ENCODE measurements at regions of chr5 and their contacts with region 1.

Region 1: GRCh38 chr5:93189707-93190120 is 391.3 kb downstream of the NR2F1-AS1 start:
- DNase-seq: peak; percentile 31 to 97
- H3K4me3 ChIP-seq: no peak overlapping the region
- H3K27ac ChIP-seq: peak overlapping the region; percentile 75
- H3K4me1 ChIP-seq: peaks cover 60% of the 10 kb centered on the region
- H3K27me3 ChIP-seq: no peaks in the 10 kb centered on the region
- CTCF ChIP-seq: no peak

Region 2: GRCh38 chr5:93078082-93079038 is 111.4 kb before region 1 on chr5:
- CTCF ChIA-PET with region 1: no interaction called
- POLR2A ChIA-PET with region 1: no interaction called
- intact Hi-C with region 1: loop called (anchors 1 kb)
- DNase-seq: peak; percentile 81 to 99
- H3K4me3 ChIP-seq: peak overlapping the region; percentile 43; the same call in 1 of the 2 replicates
- H3K27ac ChIP-seq: peak overlapping the region; percentile 94
- H3K4me1 ChIP-seq: peaks cover 35% of the 10 kb centered on the region
- H3K27me3 ChIP-seq: no peaks in the 10 kb centered on the region
- CTCF ChIP-seq: no peak

Region 3: GRCh38 chr5:93107805-93108520 is 81.8 kb before region 1 on chr5:
- CTCF ChIA-PET with region 1: no interaction called
- POLR2A ChIA-PET with region 1: no interaction called
- intact Hi-C with region 1: no loop called
- DNase-seq: no peak
- H3K4me3 ChIP-seq: no peak overlapping the region
- H3K27ac ChIP-seq: no peak overlapping the region
- H3K4me1 ChIP-seq: no peaks in the 10 kb centered on the region
- H3K27me3 ChIP-seq: no peaks in the 10 kb centered on the region
- CTCF ChIP-seq: no peak

Region 4: DNA sequence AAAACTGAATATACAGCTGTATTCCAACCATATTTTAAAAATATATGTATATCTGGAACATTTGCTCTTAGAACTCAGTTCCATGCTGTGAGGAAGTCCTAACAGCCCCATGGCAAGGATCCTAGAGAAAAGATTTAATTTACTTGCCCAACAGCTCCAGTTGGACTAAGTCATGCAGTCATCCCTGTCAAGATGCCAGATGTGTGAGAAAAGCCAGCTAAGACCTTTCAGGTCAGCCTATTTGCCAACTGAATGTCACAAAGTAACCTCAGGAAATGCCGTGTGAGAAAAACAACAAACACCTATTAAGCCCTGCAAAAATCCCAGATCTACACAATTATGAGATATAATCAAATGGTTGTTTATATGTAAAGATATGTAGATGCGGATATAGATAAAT is 25.0 kb before region 1 on chr5:
- CTCF ChIA-PET with region 1: no interaction called
- POLR2A ChIA-PET with region 1: interaction called, 6 read pairs
- intact Hi-C with region 1: loop called (anchors 1 kb)
- DNase-seq: peak; percentile 29 to 66
- H3K4me3 ChIP-seq: no peak overlapping the region
- H3K27ac ChIP-seq: peak overlapping the region; percentile 98
- H3K4me1 ChIP-seq: peaks cover 53% of the 10 kb centered on the region
- H3K27me3 ChIP-seq: no peaks in the 10 kb centered on the region
- CTCF ChIP-seq: no peak

Region 5: GRCh38 chr5:93294199-93294598 is 104.5 kb after region 1 on chr5:
- CTCF ChIA-PET with region 1: no interaction called
- POLR2A ChIA-PET with region 1: no interaction called
- intact Hi-C with region 1: loop called (anchors 5 kb)
- DNase-seq: peak; percentile 21 to 91
- H3K4me3 ChIP-seq: no peak overlapping the region
- H3K27ac ChIP-seq: peak overlapping the region; percentile 68
- H3K4me1 ChIP-seq: peaks cover 31% of the 10 kb centered on the region
- H3K27me3 ChIP-seq: no peaks in the 10 kb centered on the region
- CTCF ChIP-seq: no peak

Region 6: DNA sequence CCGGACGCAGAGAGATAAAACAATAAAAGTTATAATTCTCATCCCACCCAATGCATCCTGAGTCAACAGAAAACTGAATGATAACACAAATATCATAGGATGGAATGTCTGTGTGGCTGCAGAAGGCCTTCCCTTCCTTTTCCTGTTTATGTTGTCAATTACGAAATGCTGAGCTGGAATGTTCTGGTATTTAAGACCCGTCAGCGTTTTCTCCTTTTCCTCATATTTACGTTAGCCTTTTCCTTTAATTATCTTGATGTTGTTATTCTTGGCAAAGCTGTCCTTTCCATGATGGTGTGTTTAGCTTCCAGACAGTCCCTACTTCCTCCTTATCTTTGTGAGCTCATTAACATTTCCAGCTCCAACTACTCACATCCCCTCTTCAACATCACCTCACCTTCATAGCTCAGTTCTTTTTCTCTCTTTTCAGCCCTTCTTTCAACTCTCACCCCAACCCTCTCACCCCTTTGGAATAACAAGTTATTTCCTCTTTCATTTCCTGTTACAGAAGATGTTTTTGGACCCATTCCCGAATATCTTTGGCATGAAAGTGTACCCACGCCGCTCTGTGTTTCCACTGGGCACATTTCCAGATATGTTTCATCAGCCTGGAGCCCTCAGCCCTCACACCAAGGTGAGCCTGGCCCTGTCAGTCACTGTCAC is 169.7 kb after region 1 on chr5:
- CTCF ChIA-PET with region 1: no interaction called
- POLR2A ChIA-PET with region 1: no interaction called
- intact Hi-C with region 1: loop called (anchors 5 kb)
- DNase-seq: peak; percentile 61 to 72
- H3K4me3 ChIP-seq: peak overlapping the region; percentile 10; the same call in 1 of the 2 replicates
- H3K27ac ChIP-seq: peak overlapping the region; percentile 66
- H3K4me1 ChIP-seq: peaks cover 17% of the 10 kb centered on the region
- H3K27me3 ChIP-seq: no peaks in the 10 kb centered on the region
- CTCF ChIP-seq: no peak

Region 7: GRCh38 chr5:94228404-94229190 is 1038.9 kb after region 1 on chr5:
- CTCF ChIA-PET with region 1: no interaction called
- POLR2A ChIA-PET with region 1: interaction called, 12 read pairs
- intact Hi-C with region 1: no loop called
- DNase-seq: peak; percentile 44 to 52
- H3K4me3 ChIP-seq: no peak overlapping the region
- H3K27ac ChIP-seq: peak overlapping the region; percentile 43
- H3K4me1 ChIP-seq: peaks cover 16% of the 10 kb centered on the region
- H3K27me3 ChIP-seq: no peaks in the 10 kb centered on the region
- CTCF ChIP-seq: no peak

Measured in PC-9 (cell line).